PC-3 (cell line): ENCODE measurements at regions of chr20 and their contacts with region 1.

Region 1: DNA sequence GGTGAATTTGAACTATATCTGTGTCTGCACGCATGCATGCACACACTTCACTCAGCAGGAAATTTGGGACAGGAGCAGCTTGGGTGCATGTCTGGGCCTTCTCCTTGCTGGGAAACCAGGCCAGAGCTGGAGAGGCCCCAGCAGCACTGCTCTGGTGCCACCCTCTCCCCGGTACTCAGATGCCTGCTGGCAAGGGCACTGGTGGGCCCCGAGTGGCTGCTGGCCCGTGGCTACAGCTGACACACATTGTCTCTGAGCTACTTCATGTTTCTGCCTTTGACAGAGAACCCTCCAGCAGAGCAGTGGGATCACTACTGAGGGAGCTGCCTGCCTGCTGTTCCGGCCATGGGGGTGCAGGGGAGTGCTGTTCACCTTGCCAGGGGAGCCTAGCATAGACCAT is 37.5 kb downstream of the DLGAP4 start:
- DNase-seq: no peak
- ATAC-seq: no peak
- H3K4me3 ChIP-seq: no peak overlapping the region
- H3K27ac ChIP-seq: no peak overlapping the region
- H3K4me1 ChIP-seq: no peaks in the 10 kb centered on the region
- H3K27me3 ChIP-seq: no peaks in the 10 kb centered on the region
- CTCF ChIP-seq: no peak

Region 2: GRCh38 chr20:36307412-36308325 is 36.0 kb before region 1 on chr20:
- CTCF ChIA-PET with region 1: no interaction called
- POLR2A ChIA-PET with region 1: no interaction called
- intact Hi-C with region 1: no loop called
- DNase-seq: no peak
- ATAC-seq: no peak
- H3K4me3 ChIP-seq: no peak overlapping the region
- H3K27ac ChIP-seq: no peak overlapping the region
- H3K4me1 ChIP-seq: no peaks in the 10 kb centered on the region
- H3K27me3 ChIP-seq: peaks cover 54% of the 10 kb centered on the region
- CTCF ChIP-seq: no peak

Region 3: GRCh38 chr20:36447101-36447500 is 103.5 kb after region 1 on chr20:
- CTCF ChIA-PET with region 1: no interaction called
- POLR2A ChIA-PET with region 1: interaction called, 16 read pairs
- intact Hi-C with region 1: no loop called
- DNase-seq: peak; percentile 48
- ATAC-seq: peak; percentile 53
- H3K4me3 ChIP-seq: no peak overlapping the region
- H3K27ac ChIP-seq: no peak overlapping the region
- H3K4me1 ChIP-seq: peaks cover 7% of the 10 kb centered on the region; the same call in 1 of the 2 replicates
- H3K27me3 ChIP-seq: no peaks in the 10 kb centered on the region
- CTCF ChIP-seq: no peak